Calu3 (cell line): ENCODE measurements at regions of chr1 and their contacts with region 1.

Region 1: GRCh38 chr1:229221104-229222019 is 49.5 kb upstream of the RAB4A start:
- DNase-seq: peak; percentile 75
- H3K4me3 Mint-ChIP-seq: no peak overlapping the region
- H3K27ac Mint-ChIP-seq: no peak overlapping the region
- H3K4me1 Mint-ChIP-seq: peaks cover 24% of the 10 kb centered on the region
- H3K27me3 Mint-ChIP-seq: no peaks in the 10 kb centered on the region
- CTCF ChIP-seq: no peak

Region 2: GRCh38 chr1:228902781-228903433 is 318.5 kb before region 1 on chr1:
- CTCF ChIA-PET with region 1: interaction called, 5 read pairs
- intact Hi-C with region 1: loop called (anchors 2 kb)
- DNase-seq: peak; percentile 86
- H3K4me3 Mint-ChIP-seq: no peak overlapping the region
- H3K27ac Mint-ChIP-seq: no peak overlapping the region
- H3K4me1 Mint-ChIP-seq: peaks cover 22% of the 10 kb centered on the region
- H3K27me3 Mint-ChIP-seq: peaks cover 15% of the 10 kb centered on the region
- CTCF ChIP-seq: no peak

Region 3: GRCh38 chr1:229124520-229125124 is 96.7 kb before region 1 on chr1:
- CTCF ChIA-PET with region 1: no interaction called
- intact Hi-C with region 1: loop called (anchors 2 kb)
- DNase-seq: peak; percentile 70
- H3K4me3 Mint-ChIP-seq: no peak overlapping the region
- H3K27ac Mint-ChIP-seq: peak overlapping the region; percentile 70
- H3K4me1 Mint-ChIP-seq: peaks cover 62% of the 10 kb centered on the region
- H3K27me3 Mint-ChIP-seq: no peaks in the 10 kb centered on the region
- CTCF ChIP-seq: no peak

Region 4: DNA sequence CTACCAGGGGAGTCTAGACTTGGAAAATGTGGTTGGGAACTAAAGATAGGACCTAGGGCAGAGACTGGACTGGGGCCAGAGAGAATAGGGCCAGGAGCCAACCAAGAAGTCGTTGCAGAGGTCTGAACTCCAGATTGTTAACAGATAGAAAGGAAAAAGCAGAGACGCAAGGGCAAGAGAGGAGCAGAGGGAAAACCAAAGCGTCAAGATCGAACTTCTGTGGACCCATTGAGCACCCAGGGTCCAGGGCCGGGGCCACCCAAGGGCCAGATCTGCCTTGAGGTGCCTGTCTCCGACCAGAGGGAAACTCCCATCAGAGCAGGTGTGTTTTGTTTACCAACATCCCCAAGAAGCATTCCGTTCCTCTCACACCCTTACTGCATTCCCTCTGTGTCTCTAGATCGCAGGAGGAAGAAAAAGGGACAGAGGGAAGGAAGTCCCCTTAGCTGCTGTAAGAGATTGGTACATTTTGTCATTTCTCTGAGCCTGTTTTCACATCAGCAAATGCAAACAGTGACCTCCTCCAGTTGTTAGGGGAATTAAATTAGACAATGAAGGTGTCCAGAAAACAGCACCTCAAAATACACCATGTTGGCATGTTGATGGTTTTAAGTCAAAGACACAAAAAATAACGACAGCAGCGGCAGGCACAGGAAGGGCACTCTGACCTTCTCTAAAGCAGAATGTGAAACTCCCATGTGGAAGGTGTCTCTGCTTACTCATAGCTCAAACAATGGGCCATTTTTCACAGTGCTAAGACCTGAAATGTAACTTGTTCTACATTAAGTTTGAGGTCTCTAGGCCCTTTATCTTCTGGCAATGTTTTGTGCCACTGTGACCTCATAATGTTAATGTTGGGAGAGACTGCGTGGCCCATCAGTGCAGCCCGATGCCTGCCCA is 56.3 kb before region 1 on chr1:
- CTCF ChIA-PET with region 1: no interaction called
- intact Hi-C with region 1: loop called (anchors 2 kb)
- DNase-seq: peak; percentile 50
- H3K4me3 Mint-ChIP-seq: peak overlapping the region; percentile 27
- H3K27ac Mint-ChIP-seq: peak overlapping the region; percentile 93
- H3K4me1 Mint-ChIP-seq: peaks cover 34% of the 10 kb centered on the region
- H3K27me3 Mint-ChIP-seq: no peaks in the 10 kb centered on the region
- CTCF ChIP-seq: no peak

Region 5: GRCh38 chr1:229199850-229200243 is 21.5 kb before region 1 on chr1:
- CTCF ChIA-PET with region 1: no interaction called
- intact Hi-C with region 1: loop called (anchors 1 kb)
- DNase-seq: peak; percentile 58
- H3K4me3 Mint-ChIP-seq: no peak overlapping the region
- H3K27ac Mint-ChIP-seq: peak overlapping the region; percentile 59
- H3K4me1 Mint-ChIP-seq: peaks cover 29% of the 10 kb centered on the region
- H3K27me3 Mint-ChIP-seq: no peaks in the 10 kb centered on the region
- CTCF ChIP-seq: no peak